ENCODE measurements at regions of chr9 and their contacts with region 1.

Region 1: DNA sequence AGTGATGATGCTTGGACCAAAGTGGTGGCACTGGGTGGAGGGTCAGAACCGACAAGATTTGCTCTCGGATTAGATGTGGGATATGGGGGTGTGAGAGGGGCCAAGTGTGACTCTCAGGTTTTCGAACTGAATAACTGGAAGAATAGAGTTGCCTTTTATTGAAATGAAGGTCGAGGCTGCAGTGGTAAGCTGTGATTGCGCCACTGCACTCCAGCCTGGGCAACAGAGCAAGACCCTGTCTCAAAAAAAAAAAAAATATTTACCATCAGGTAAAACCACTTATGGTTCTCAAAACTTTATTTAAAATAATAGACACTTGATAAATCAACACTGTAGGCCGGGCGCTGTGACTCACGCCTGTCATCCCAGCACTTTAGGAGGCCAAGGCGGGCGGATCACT is 27.2 kb downstream of the EXOSC2 start:
- DNase-seq: no peak
- ATAC-seq: no peak
- H3K4me3 ChIP-seq: no peak overlapping the region
- H3K27ac ChIP-seq: no peak overlapping the region
- H3K4me1 ChIP-seq: peaks cover 0 to 18% (median 9%) of the 10 kb centered on the region in 12 donors
- H3K27me3 ChIP-seq: no peaks in the 10 kb centered on the region
- CTCF ChIP-seq: no peak
- POLR2A ChIP-seq: no peak

Region 2: DNA sequence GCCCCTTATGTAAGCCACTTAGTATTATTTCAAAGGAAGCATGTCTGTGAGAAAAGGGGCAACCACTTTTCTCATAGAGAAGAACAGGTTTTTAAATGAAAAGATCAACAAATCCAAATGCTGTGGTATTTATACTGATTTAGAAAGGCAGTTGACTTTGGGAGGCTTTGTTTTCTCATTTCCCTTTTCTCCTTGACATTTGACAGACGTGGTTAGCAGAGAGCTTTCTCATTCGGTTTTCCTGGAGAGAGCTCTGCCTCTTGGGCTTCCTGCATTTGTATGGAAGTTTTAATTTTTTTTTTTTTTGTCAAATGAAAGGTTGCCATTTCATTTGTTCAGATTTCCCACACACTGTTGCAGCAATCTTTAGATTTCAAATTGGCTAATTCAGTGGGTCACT is 35.3 kb after region 1 on chr9:
- intact Hi-C with region 1: loop called in 3 of 10 experiments (anchors 5 to 10 kb)
- DNase-seq: no peak
- ATAC-seq: peak in 1 of 4 donors; percentile 61
- H3K4me3 ChIP-seq: peak overlapping the region in 1 of 12 donors; percentile 2
- H3K27ac ChIP-seq: peak overlapping the region in 5 of 12 donors; percentile 3 to 64 (median 23)
- H3K4me1 ChIP-seq: peaks cover 0 to 28% (median 21%) of the 10 kb centered on the region in 12 donors
- H3K27me3 ChIP-seq: no peaks in the 10 kb centered on the region
- CTCF ChIP-seq: no peak
- POLR2A ChIP-seq: no peak

Measured in heart left ventricle (tissue), 16 donors.